CD4-positive, alpha-beta T cell (primary cell): ENCODE measurements at regions of chr1 and their contacts with region 1.

Region 1: GRCh38 chr1:211830330-211831142 is at the start of gene LPGAT1:
- DNase-seq: peak; percentile 47 to 85 (median 64)
- ATAC-seq: peak; percentile 82
- H3K4me3 ChIP-seq: peak within 1 kb of the TSS; percentile 82
- H3K4me3 Mint-ChIP-seq: peak within 1 kb of the TSS; percentile 95
- H3K27ac ChIP-seq: peak within 1 kb of the TSS in 1 of 2 donors; percentile 66
- H3K27ac Mint-ChIP-seq: peak within 1 kb of the TSS; percentile 84
- H3K4me1 ChIP-seq: peaks cover 42% of the 10 kb centered on the region
- H3K4me1 Mint-ChIP-seq: peaks cover 68% of the 10 kb centered on the region
- H3K27me3 ChIP-seq: no peaks in the 10 kb centered on the region
- H3K27me3 Mint-ChIP-seq: no peaks in the 10 kb centered on the region
- CTCF ChIP-seq: peak; percentile 62
- total RNA-seq, gene LPGAT1: 14.0 to 14.4 TPM

Region 2: DNA sequence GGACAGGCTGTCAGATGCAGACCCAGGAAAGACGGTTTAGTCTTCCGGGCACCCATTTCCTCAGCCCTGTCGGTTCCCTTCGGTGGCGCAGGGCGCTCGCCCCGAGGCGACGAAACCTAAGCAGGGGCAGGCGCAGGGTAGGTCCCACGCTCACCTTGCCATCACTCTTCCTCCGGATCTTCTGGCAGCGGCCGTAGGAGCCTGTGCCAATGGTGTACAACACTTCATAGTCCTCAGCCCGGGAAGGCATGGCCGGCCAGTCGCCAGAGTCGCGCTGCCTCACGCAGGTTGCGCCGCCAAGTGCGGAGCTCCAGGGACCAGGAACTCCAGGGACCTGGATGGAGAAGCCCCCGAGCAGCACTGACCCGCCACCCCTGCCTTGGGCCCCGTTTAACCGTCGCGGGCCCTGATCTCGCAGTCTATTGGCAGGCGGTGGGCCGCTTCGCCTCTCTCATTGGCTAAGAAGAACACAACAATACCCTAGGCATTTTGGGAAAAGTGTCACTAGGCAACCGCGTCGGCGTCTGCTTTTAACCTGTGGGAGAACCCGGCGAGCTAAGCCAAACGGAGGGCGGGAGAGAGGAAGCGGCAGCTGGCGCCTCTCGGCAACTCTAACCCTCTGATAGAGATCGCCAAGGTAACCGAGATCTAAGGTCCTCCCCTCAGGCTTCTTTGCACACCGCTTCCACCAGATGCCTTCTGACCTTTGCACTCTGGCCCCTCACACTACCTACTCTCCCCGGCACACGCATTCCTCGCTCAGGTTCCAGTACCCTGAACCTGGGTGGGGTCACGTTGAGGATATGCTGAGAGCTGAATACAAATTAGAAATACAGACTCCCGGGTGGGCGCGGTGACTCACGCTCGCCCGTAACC is 155.1 kb before region 1 on chr1 and contains the start of gene NEK2:
- CTCF ChIA-PET with region 1: interaction called, 3 read pairs
- POLR2A ChIA-PET with region 1: no interaction called
- intact Hi-C with region 1: loop called (anchors 2 kb)
- DNase-seq: peak; percentile 70 to 93 (median 79)
- ATAC-seq: peak; percentile 94
- H3K4me3 ChIP-seq: peak within 1 kb of the TSS; percentile 67
- H3K4me3 Mint-ChIP-seq: peak within 1 kb of the TSS; percentile 92
- H3K27ac ChIP-seq: no peak within 1 kb of the TSS
- H3K27ac Mint-ChIP-seq: peak within 1 kb of the TSS; percentile 73
- H3K4me1 ChIP-seq: peaks cover 15% of the 10 kb centered on the region
- H3K4me1 Mint-ChIP-seq: peaks cover 7% of the 10 kb centered on the region
- H3K27me3 ChIP-seq: no peaks in the 10 kb centered on the region
- H3K27me3 Mint-ChIP-seq: no peaks in the 10 kb centered on the region
- CTCF ChIP-seq: no peak
- total RNA-seq, gene NEK2: not detected

Region 3: GRCh38 chr1:211698161-211699026 is 132.1 kb before region 1 on chr1:
- CTCF ChIA-PET with region 1: interaction called, 8 read pairs
- POLR2A ChIA-PET with region 1: interaction called, 3 read pairs
- intact Hi-C with region 1: loop called in 1 of 2 experiments (anchors 1 kb)
- DNase-seq: peak; percentile 64 to 85 (median 79)
- ATAC-seq: peak; percentile 98
- H3K4me3 ChIP-seq: peak overlapping the region; percentile 35
- H3K4me3 Mint-ChIP-seq: no peak overlapping the region
- H3K27ac ChIP-seq: no peak overlapping the region
- H3K27ac Mint-ChIP-seq: no peak overlapping the region
- H3K4me1 ChIP-seq: peaks cover 29% of the 10 kb centered on the region
- H3K4me1 Mint-ChIP-seq: peaks cover 16% of the 10 kb centered on the region
- H3K27me3 ChIP-seq: no peaks in the 10 kb centered on the region
- H3K27me3 Mint-ChIP-seq: no peaks in the 10 kb centered on the region
- CTCF ChIP-seq: peak; percentile 78

Region 4: DNA sequence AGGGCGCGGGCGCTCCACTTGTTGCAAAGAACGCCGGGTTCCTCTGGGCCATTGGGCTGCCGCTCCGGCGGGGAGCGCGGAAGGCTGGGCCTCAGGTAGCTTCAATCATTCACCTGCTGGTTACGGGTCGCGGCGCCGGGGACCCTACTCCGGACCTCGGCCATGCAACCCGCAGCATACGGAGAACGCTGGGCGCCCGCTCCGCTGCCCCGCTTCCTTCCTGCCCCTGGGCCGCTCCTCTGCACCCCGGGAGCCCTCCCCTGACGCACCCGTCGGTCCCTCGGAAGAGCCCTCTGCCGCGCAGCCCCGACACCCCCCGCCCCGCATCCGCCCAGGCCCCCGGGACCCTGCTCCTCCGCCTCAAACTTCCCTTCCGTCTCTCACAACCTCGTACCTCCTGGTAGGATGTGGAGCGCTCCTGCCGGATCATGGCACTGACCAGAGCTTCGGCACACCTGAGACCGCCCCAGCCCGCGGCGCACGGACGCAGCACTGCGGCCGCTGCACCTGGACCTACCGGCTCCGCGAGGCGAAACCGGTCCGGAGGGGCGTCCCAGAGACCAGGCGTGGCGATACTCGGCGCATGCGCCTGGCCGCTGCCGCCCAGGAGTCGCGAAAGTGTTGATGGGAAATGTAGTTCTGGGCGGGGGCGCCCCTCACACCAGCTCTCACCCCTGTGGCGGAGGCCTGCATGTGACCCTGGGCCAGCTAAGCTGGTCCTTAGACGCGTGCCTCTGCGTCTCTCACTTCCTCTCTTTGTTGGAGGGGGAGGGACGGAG is 584.0 kb after region 1 on chr1 and contains the start of gene PACC1:
- CTCF ChIA-PET with region 1: no interaction called
- POLR2A ChIA-PET with region 1: no interaction called
- intact Hi-C with region 1: loop called in 1 of 2 experiments (anchors 10 kb)
- DNase-seq: peak; percentile 70 to 95 (median 81)
- ATAC-seq: peak; percentile 85
- H3K4me3 ChIP-seq: peak within 1 kb of the TSS; percentile 76
- H3K4me3 Mint-ChIP-seq: peak within 1 kb of the TSS; percentile 89
- H3K27ac ChIP-seq: peak within 1 kb of the TSS; percentile 40 to 72
- H3K27ac Mint-ChIP-seq: peak within 1 kb of the TSS; percentile 82
- H3K4me1 ChIP-seq: peaks cover 30% of the 10 kb centered on the region
- H3K4me1 Mint-ChIP-seq: peaks cover 22% of the 10 kb centered on the region
- H3K27me3 ChIP-seq: no peaks in the 10 kb centered on the region
- H3K27me3 Mint-ChIP-seq: no peaks in the 10 kb centered on the region
- CTCF ChIP-seq: no peak
- total RNA-seq, gene PACC1: 1.8 to 2.1 TPM

Region 5: GRCh38 chr1:212566522-212567479 is 736.3 kb after region 1 on chr1:
- CTCF ChIA-PET with region 1: no interaction called
- POLR2A ChIA-PET with region 1: no interaction called
- intact Hi-C with region 1: loop called in 1 of 2 experiments (anchors 10 kb)
- DNase-seq: peak in 13 of 14 experiments; percentile 11 to 80 (median 46)
- ATAC-seq: peak; percentile 99
- H3K4me3 ChIP-seq: peak overlapping the region; percentile 66
- H3K4me3 Mint-ChIP-seq: peak overlapping the region; percentile 99
- H3K27ac ChIP-seq: no peak overlapping the region
- H3K27ac Mint-ChIP-seq: peak overlapping the region; percentile 62
- H3K4me1 ChIP-seq: peaks cover 6% of the 10 kb centered on the region
- H3K4me1 Mint-ChIP-seq: peaks cover 16% of the 10 kb centered on the region
- H3K27me3 ChIP-seq: no peaks in the 10 kb centered on the region
- H3K27me3 Mint-ChIP-seq: peaks cover under 1% of the 10 kb centered on the region
- CTCF ChIP-seq: no peak

Region 6: GRCh38 chr1:212967801-212968200 is 1137.3 kb after region 1 on chr1:
- CTCF ChIA-PET with region 1: no interaction called
- POLR2A ChIA-PET with region 1: no interaction called
- intact Hi-C with region 1: no loop called
- DNase-seq: no peak
- ATAC-seq: no peak
- H3K4me3 ChIP-seq: no peak overlapping the region
- H3K4me3 Mint-ChIP-seq: no peak overlapping the region
- H3K27ac ChIP-seq: no peak overlapping the region
- H3K27ac Mint-ChIP-seq: no peak overlapping the region
- H3K4me1 ChIP-seq: no peaks in the 10 kb centered on the region
- H3K4me1 Mint-ChIP-seq: no peaks in the 10 kb centered on the region
- H3K27me3 ChIP-seq: peaks cover 3 to 5% of the 10 kb centered on the region in 2 experiments
- H3K27me3 Mint-ChIP-seq: no peaks in the 10 kb centered on the region
- CTCF ChIP-seq: no peak